GM10248 (cell line): ENCODE measurements at regions of chr16 and their contacts with region 1.

Region 1: GRCh38 chr16:85717393-85718121 is 28.8 kb upstream of the GINS2 start:
- DNase-seq: peak; percentile 79
- CTCF ChIP-seq: peak; percentile 54

Region 2: GRCh38 chr16:85649411-85650183 is 68.0 kb before region 1 on chr16:
- CTCF ChIA-PET with region 1: no interaction called
- POLR2A ChIA-PET with region 1: no interaction called
- DNase-seq: no peak
- CTCF ChIP-seq: no peak

Region 3: DNA sequence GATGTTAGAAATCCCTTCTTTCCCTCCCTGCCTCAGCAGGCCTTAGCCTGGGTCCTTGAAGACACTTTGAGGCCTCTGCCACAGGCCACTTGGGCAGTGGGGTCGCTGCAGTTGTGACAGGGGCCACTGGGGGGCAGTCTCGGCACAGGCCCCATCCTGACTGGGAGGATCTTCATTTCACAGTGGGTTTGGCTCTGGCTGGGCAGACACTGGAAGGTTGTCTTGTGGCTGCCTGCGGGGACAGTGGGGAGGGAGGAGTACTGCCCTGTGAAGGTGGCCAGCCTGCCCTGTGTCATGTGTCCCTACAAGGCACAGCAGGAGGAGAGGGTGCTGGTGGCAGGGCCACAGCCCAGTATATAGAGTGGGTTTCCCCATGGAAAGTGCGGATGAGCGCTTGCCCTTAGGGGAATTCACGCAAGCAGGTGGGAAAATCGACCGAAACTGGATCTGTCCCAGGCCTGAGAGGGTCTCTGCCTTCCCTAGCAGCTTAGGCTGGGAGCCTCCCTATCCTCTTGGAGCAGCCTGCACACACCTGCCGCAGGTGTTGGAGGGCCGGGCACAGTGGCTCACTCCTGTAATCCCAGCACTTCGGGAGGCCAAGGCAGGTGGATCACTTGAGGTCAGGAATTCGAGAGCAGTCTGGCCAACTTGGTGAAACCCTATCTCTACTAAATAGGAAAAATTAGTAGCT is 57.6 kb before region 1 on chr16:
- CTCF ChIA-PET with region 1: interaction called, 23 read pairs
- POLR2A ChIA-PET with region 1: no interaction called
- DNase-seq: peak; percentile 86
- CTCF ChIP-seq: peak; percentile 94

Region 4: GRCh38 chr16:85675251-85675927 is 42.2 kb before region 1 on chr16:
- CTCF ChIA-PET with region 1: interaction called, 17 read pairs
- POLR2A ChIA-PET with region 1: no interaction called
- DNase-seq: no peak
- CTCF ChIP-seq: peak; percentile 37

Region 5: DNA sequence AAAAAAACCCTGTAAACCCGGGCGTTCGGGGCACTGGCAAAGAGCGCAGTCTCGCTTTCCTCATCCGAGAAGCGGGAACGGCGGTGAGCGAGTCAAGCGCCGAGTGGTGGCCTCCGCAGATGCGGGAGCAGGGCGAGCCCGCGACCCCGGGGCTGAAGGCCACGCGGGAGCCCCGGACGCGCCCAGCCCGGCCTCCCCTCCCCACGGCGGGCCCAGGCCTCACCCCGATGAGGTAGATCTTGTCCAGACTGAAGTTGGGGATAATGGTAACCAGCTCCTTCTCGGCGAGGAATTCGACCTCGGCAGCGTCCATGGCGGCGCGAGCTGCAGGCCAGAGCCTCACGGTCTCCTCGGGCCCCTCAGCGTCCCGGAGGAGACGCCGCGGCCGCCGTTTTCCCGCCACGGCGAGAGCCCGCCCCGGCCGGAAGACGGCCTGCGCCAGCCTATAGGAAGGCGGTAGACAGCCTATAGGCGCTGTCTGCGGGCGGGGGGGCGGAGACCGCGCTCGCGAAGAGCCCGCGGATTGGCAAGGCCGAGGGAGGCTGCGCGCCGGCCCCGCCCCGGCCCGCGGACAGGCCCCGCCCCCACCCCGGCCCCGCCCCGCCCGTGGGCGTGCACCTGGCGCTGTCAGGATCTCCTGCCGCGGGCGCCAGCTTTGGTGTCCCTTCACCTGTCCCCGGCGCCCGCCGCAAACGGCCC is 28.8 kb before region 1 on chr16 and contains the start of gene GINS2:
- CTCF ChIA-PET with region 1: interaction called, 28 read pairs
- POLR2A ChIA-PET with region 1: no interaction called
- DNase-seq: peak; percentile 100
- CTCF ChIP-seq: no peak

Region 6: DNA sequence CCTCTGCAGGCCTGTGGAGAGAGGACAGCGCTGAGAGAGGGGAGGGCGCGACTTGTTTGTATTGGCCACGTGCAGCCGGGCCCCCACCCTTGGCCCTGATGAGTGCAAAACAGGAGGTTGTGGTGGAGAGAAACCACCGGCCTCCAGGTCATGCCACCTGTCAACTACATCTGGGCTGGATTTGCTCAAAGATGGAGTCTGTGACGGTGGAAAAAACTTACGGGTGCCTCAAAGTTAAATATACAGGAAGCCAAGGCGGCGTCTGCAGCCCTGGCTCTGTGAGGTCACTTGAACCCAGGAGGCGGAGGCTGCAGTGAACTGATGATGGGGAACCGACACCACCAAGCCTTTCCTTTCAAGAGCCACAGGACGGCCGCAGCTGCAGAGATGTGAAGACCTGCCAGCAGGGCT is 17.7 kb after region 1 on chr16:
- CTCF ChIA-PET with region 1: interaction called, 12 read pairs
- POLR2A ChIA-PET with region 1: no interaction called
- DNase-seq: peak; percentile 82
- CTCF ChIP-seq: no peak

Region 7: DNA sequence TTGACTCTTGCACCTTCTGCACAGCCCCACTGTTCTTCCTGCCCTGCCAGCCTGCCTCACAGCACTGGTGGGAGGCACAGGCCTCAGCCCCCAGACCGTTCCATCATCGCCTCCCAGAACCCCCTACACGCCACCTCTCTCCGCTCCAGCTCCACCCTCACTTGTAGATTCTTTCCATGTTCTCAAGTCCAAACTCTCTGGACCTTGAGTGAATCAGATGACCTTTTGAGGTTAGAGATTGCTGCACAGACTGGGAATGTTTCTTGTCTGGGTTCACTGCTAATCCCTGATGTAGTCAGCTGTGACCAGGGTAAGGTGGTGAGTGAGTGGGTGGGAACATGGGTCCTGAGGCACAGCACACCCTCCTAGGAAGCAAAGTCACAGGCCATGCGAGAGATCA is 453.8 kb after region 1 on chr16:
- CTCF ChIA-PET with region 1: no interaction called
- POLR2A ChIA-PET with region 1: no interaction called
- DNase-seq: no peak
- CTCF ChIP-seq: no peak